IMR-90 (cell line): ENCODE measurements at regions of chr6 and their contacts with region 1.

Region 1: DNA sequence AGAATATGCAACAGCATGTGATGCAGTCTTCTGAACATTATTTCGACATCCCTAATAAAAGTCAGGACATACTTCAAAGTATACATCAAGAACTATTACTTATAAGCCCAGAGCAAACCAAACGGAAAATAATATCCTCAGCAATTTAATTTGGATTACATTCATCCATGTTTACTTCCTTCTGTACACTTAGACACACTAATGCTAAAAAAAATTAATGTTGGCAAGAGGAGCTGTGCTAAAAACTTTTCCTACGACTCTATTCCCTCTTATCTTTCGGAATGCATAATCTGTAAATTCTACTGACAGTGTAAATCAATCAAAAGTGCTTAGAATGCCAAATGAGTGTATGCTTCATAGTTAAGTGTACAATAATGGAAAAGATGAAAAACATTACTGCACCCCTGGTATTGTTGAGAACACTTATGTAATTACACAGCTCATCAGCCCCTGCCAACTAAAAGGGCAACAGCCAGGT is 301.2 kb upstream of the HSF2 start:
- DNase-seq: no peak
- ATAC-seq: no peak
- H3K4me3 ChIP-seq: no peak overlapping the region
- H3K27ac ChIP-seq: no peak overlapping the region
- H3K4me1 ChIP-seq: no peaks in the 10 kb centered on the region
- H3K27me3 ChIP-seq: no peaks in the 10 kb centered on the region
- CTCF ChIP-seq: no peak
- POLR2A ChIP-seq: no peak
- RAD21 ChIP-seq: no peak

Region 2: GRCh38 chr6:122143813-122144601 is 45.8 kb after region 1 on chr6:
- CTCF ChIA-PET with region 1: no interaction called
- POLR2A ChIA-PET with region 1: no interaction called
- dilution Hi-C with region 1: no loop called
- in situ Hi-C with region 1: no loop called
- intact Hi-C with region 1: loop called (anchors 5 kb)
- DNase-seq: no peak
- ATAC-seq: no peak
- H3K4me3 ChIP-seq: no peak overlapping the region
- H3K27ac ChIP-seq: no peak overlapping the region
- H3K4me1 ChIP-seq: no peaks in the 10 kb centered on the region
- H3K27me3 ChIP-seq: no peaks in the 10 kb centered on the region
- CTCF ChIP-seq: no peak
- POLR2A ChIP-seq: no peak
- RAD21 ChIP-seq: no peak

Region 3: GRCh38 chr6:122645256-122645655 is 547.0 kb after region 1 on chr6:
- CTCF ChIA-PET with region 1: no interaction called
- POLR2A ChIA-PET with region 1: no interaction called
- dilution Hi-C with region 1: no loop called
- in situ Hi-C with region 1: no loop called
- intact Hi-C with region 1: no loop called
- DNase-seq: no peak
- ATAC-seq: no peak
- H3K4me3 ChIP-seq: no peak overlapping the region
- H3K27ac ChIP-seq: no peak overlapping the region
- H3K4me1 ChIP-seq: no peaks in the 10 kb centered on the region
- H3K27me3 ChIP-seq: no peaks in the 10 kb centered on the region
- CTCF ChIP-seq: no peak
- POLR2A ChIP-seq: no peak
- RAD21 ChIP-seq: no peak